Natural killer cell (primary cell): ENCODE measurements at regions of chr4 and their contacts with region 1.

Region 1: GRCh38 chr4:18593445-18594002 is 572.0 kb upstream of the LCORL start:
- DNase-seq: peak; percentile 18 to 79
- ATAC-seq: peak; percentile 55 to 71 (median 59)
- H3K4me3 ChIP-seq: no peak overlapping the region
- H3K4me3 Mint-ChIP-seq: no peak overlapping the region
- H3K27ac ChIP-seq: no peak overlapping the region
- H3K27ac Mint-ChIP-seq: no peak overlapping the region
- H3K4me1 ChIP-seq: no peaks in the 10 kb centered on the region
- H3K4me1 Mint-ChIP-seq: peaks cover 7% of the 10 kb centered on the region in 2 donors
- H3K27me3 ChIP-seq: no peaks in the 10 kb centered on the region
- H3K27me3 Mint-ChIP-seq: no peaks in the 10 kb centered on the region
- CTCF ChIP-seq: peak; percentile 81

Region 2: GRCh38 chr4:17544205-17544604 is 1049.3 kb before region 1 on chr4:
- intact Hi-C with region 1: loop called (anchors 1 kb)
- DNase-seq: no peak
- ATAC-seq: no peak
- H3K4me3 ChIP-seq: no peak overlapping the region
- H3K4me3 Mint-ChIP-seq: no peak overlapping the region
- H3K27ac ChIP-seq: no peak overlapping the region
- H3K27ac Mint-ChIP-seq: no peak overlapping the region
- H3K4me1 ChIP-seq: no peaks in the 10 kb centered on the region
- H3K4me1 Mint-ChIP-seq: peaks cover 1 to 3% of the 10 kb centered on the region in 2 donors
- H3K27me3 ChIP-seq: no peaks in the 10 kb centered on the region
- H3K27me3 Mint-ChIP-seq: peaks cover 18 to 37% of the 10 kb centered on the region in 2 donors
- CTCF ChIP-seq: no peak

Region 3: GRCh38 chr4:17636696-17637622 is 956.6 kb before region 1 on chr4:
- intact Hi-C with region 1: loop called (anchors 1 kb)
- DNase-seq: peak; percentile 67 to 83
- ATAC-seq: peak; percentile 79 to 91 (median 89)
- H3K4me3 ChIP-seq: no peak overlapping the region
- H3K4me3 Mint-ChIP-seq: no peak overlapping the region
- H3K27ac ChIP-seq: no peak overlapping the region
- H3K27ac Mint-ChIP-seq: peak overlapping the region; percentile 29 to 45
- H3K4me1 ChIP-seq: no peaks in the 10 kb centered on the region
- H3K4me1 Mint-ChIP-seq: no peaks in the 10 kb centered on the region
- H3K27me3 ChIP-seq: no peaks in the 10 kb centered on the region
- H3K27me3 Mint-ChIP-seq: no peaks in the 10 kb centered on the region
- CTCF ChIP-seq: peak; percentile 89

Region 4: GRCh38 chr4:17817020-17817419 is 776.5 kb before region 1 on chr4:
- intact Hi-C with region 1: loop called (anchors 1 kb)
- DNase-seq: peak in 1 of 2 donors; percentile 69
- ATAC-seq: peak; percentile 73 to 83 (median 79)
- H3K4me3 ChIP-seq: no peak overlapping the region
- H3K4me3 Mint-ChIP-seq: no peak overlapping the region
- H3K27ac ChIP-seq: no peak overlapping the region
- H3K27ac Mint-ChIP-seq: no peak overlapping the region
- H3K4me1 ChIP-seq: no peaks in the 10 kb centered on the region
- H3K4me1 Mint-ChIP-seq: no peaks in the 10 kb centered on the region
- H3K27me3 ChIP-seq: no peaks in the 10 kb centered on the region
- H3K27me3 Mint-ChIP-seq: no peaks in the 10 kb centered on the region
- CTCF ChIP-seq: peak; percentile 39

Region 5: GRCh38 chr4:18242919-18243693 is 350.4 kb before region 1 on chr4:
- intact Hi-C with region 1: no loop called
- DNase-seq: no peak
- ATAC-seq: no peak
- H3K4me3 ChIP-seq: no peak overlapping the region
- H3K4me3 Mint-ChIP-seq: no peak overlapping the region
- H3K27ac ChIP-seq: no peak overlapping the region
- H3K27ac Mint-ChIP-seq: no peak overlapping the region
- H3K4me1 ChIP-seq: no peaks in the 10 kb centered on the region
- H3K4me1 Mint-ChIP-seq: no peaks in the 10 kb centered on the region
- H3K27me3 ChIP-seq: no peaks in the 10 kb centered on the region
- H3K27me3 Mint-ChIP-seq: no peaks in the 10 kb centered on the region
- CTCF ChIP-seq: no peak